ENCODE measurements at regions of chr18 and their contacts with region 1.

Region 1: GRCh38 chr18:59996370-59996966 is 96.7 kb downstream of the PMAIP1 start:
- DNase-seq: no peak
- H3K4me3 Mint-ChIP-seq: no peak overlapping the region
- H3K27ac Mint-ChIP-seq: no peak overlapping the region
- H3K4me1 Mint-ChIP-seq: no peaks in the 10 kb centered on the region
- H3K27me3 Mint-ChIP-seq: peaks cover 17% of the 10 kb centered on the region

Region 2: DNA sequence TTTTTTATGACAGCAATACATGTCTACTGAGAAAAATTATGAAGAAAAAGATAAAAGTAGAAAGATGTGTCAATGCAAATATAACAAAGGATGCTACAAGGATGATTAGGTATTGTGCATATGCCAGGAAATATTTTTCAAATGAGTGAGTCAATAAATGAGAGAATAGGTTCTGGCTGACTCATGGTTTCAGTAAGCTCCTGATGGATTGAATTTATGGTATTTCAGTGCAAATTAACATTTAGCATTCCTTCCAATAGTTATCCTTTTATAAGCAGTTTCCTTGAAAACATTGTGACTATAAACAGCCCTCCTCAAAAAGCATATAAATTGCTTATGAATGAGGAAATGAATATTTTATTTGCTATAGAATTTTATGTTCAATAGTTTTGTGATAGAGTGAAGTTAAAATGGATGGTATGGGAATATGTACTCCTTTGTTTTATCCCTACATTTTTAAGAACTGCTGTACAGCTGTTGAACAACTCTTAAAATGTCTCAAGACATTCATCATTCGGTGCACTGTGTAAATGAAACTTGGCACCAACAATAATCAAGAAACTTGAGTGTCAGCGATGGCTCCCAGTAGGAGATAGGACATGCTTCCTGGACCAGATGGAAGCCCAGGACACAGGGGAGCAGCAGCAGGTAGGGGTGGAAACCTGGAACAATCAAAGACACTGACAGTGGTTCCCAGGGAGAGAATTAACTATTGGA is 48.0 kb after region 1 on chr18:
- CTCF ChIA-PET with region 1: no interaction called
- DNase-seq: no peak
- H3K4me3 Mint-ChIP-seq: no peak overlapping the region
- H3K27ac Mint-ChIP-seq: no peak overlapping the region
- H3K4me1 Mint-ChIP-seq: no peaks in the 10 kb centered on the region
- H3K27me3 Mint-ChIP-seq: no peaks in the 10 kb centered on the region

Region 3: DNA sequence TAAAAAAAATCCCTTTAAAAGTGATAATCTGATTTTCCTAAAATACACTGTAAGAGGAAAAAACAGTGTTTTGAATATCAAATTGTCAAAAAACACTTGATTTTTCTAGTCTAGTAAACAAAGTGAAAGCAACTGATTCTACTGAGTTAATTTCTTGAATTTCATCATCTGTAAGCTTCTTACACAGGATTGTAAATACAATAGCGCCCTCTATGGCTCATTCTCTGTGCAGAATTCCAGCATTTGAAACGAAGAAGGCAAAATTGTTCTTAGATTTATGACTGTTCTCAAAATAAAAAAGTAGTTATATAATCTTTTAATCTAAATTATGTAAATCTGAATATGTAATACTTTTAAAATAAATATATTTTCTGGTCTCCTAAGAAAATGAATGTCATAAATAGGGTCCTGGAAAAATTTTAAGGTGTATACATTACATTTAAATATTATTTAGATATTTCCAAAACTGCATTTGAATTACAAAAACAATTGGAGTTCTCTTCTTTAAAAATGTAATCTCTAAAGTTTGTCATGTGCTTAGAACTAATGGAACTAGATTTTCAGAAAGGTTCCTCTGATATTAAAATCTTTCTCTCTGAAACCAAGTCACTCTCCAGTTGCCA is 553.0 kb after region 1 on chr18:
- CTCF ChIA-PET with region 1: interaction called, 14 read pairs
- DNase-seq: no peak
- H3K4me3 Mint-ChIP-seq: no peak overlapping the region
- H3K27ac Mint-ChIP-seq: no peak overlapping the region
- H3K4me1 Mint-ChIP-seq: no peaks in the 10 kb centered on the region
- H3K27me3 Mint-ChIP-seq: no peaks in the 10 kb centered on the region